Cardiac septum (tissue), 1 donor: ENCODE measurements at regions of chr9 and their contacts with region 1.

Region 1: GRCh38 chr9:95726756-95727155 is 148.7 kb upstream of the ERCC6L2 start:
- DNase-seq: no peak

Region 2: GRCh38 chr9:96067004-96067999 is 340.5 kb after region 1 on chr9:
- intact Hi-C with region 1: loop called (anchors 5 kb)
- DNase-seq: no peak

Region 3: GRCh38 chr9:96217754-96218693 is 491.3 kb after region 1 on chr9:
- intact Hi-C with region 1: loop called (anchors 2 kb)
- DNase-seq: peak; percentile 85

Region 4: GRCh38 chr9:96317335-96317980 is 590.7 kb after region 1 on chr9:
- intact Hi-C with region 1: loop called (anchors 10 kb)
- DNase-seq: no peak